IMR-90 (cell line): ENCODE measurements at regions of chr4 and their contacts with region 1.

Region 1: DNA sequence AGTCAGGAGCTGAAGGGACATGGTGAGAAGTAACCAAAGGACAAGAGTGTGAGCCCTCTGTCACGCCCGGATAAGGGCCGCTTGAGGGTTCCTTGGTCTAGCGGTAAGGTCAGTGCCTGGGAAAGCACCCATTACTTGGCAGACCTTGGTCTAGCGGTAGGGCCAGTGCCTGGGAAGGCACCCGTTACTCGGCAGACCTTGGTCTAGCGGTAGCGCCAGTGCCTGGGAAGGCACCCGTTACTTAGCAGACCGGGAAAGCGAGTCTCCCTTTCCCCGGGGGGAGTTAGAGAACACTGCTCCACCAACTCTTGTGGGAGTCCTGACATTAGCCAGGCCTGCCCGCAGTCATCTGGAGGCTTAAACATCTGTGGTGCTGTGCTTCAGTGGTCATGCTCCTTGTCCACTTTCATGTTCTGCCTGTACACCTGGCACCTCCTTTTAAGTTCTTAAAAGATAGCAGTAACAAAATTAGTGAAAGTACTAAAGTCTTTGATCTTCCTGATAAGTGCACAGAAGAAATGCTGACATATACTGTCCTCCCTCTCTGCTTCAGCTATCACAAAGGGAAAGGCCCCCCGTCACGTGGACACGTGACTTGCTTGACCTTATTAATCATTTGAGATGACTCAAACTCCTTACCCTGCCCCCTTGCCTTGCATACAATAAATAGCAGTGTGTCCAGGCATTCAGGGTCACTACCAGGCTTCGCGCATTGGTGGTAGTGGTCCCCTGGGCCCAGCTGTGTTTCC is 9.3 kb upstream of the SEC24B start:
- DNase-seq: no peak
- ATAC-seq: no peak
- H3K4me3 ChIP-seq: no peak overlapping the region
- H3K27ac ChIP-seq: no peak overlapping the region
- H3K4me1 ChIP-seq: no peaks in the 10 kb centered on the region
- H3K27me3 ChIP-seq: no peaks in the 10 kb centered on the region; the same call in 1 of the 2 replicates
- CTCF ChIP-seq: no peak
- POLR2A ChIP-seq: no peak
- RAD21 ChIP-seq: no peak

Region 2: GRCh38 chr4:109648266-109648996 is 224.2 kb after region 1 on chr4:
- CTCF ChIA-PET with region 1: no interaction called
- POLR2A ChIA-PET with region 1: no interaction called
- dilution Hi-C with region 1: no loop called
- in situ Hi-C with region 1: no loop called
- intact Hi-C with region 1: no loop called
- DNase-seq: no peak
- ATAC-seq: no peak
- H3K4me3 ChIP-seq: no peak overlapping the region
- H3K27ac ChIP-seq: no peak overlapping the region
- H3K4me1 ChIP-seq: no peaks in the 10 kb centered on the region
- H3K27me3 ChIP-seq: no peaks in the 10 kb centered on the region
- CTCF ChIP-seq: no peak
- POLR2A ChIP-seq: no peak
- RAD21 ChIP-seq: no peak

Region 3: DNA sequence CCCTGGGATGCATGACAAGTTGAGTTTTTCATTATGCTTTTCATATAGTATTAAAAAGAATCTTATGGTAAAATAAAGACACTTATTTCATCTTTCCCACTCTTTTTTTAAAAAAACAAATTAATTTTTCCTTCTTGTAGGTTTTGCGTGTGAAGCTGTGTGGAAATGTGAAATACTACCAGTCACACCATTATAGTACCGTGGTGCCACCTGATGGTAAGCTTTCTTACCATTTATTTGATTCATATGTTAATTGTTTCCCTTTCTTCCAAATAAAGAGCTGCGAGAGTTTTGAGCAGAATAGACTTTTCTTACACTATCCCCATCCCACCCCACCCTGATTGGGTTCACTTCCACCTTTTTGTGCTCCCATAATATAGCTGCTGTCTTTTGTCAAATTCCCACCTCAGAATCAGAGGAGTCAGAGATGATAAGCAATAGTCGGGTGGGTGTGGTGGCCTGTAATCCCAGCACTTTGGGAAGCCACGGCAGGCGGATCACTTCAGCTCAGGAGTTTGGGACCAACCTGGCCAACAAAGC is 234.7 kb after region 1 on chr4:
- CTCF ChIA-PET with region 1: no interaction called
- POLR2A ChIA-PET with region 1: no interaction called
- dilution Hi-C with region 1: no loop called
- in situ Hi-C with region 1: no loop called
- intact Hi-C with region 1: loop called (anchors 5 kb)
- DNase-seq: peak; percentile 6
- ATAC-seq: no peak
- H3K4me3 ChIP-seq: no peak overlapping the region
- H3K27ac ChIP-seq: no peak overlapping the region
- H3K4me1 ChIP-seq: no peaks in the 10 kb centered on the region
- H3K27me3 ChIP-seq: no peaks in the 10 kb centered on the region
- CTCF ChIP-seq: peak; percentile 24; the same call in 1 of the 2 replicates
- POLR2A ChIP-seq: no peak
- RAD21 ChIP-seq: peak; percentile 25

Region 4: DNA sequence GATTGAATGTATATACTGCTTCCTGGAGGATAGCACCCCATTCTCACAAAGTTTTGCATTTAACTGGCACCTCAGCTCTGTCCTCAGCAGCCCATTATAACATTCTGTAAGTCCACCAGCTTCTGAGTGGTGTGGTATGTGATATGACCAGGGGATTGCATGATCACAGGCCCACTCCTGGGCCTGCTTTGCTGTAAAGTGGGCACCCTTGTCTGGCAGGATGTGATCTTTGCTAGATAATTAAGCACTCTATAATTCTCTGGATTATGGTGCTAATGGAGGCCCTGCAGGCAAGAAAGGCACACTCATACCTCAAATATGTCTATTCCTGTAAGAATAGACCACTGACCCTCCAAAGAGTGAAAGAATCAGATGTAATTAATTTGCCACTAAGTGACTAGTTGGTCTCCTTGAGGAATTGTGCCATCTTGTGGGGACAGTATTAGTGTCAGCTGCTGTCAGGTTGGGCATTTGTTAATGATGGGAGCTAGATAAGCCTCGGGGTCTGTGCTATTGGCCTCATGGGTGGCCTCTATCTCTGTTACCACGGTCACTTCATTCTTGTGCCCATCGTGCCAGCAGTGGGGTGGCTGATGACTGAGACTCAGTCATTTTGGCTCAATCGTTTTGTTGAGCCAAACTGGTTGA is 379.8 kb after region 1 on chr4:
- CTCF ChIA-PET with region 1: interaction called, 5 read pairs
- POLR2A ChIA-PET with region 1: no interaction called
- dilution Hi-C with region 1: no loop called
- in situ Hi-C with region 1: no loop called
- intact Hi-C with region 1: loop called (anchors 1 kb)
- DNase-seq: peak; percentile 37
- ATAC-seq: peak; percentile 65
- H3K4me3 ChIP-seq: no peak overlapping the region
- H3K27ac ChIP-seq: no peak overlapping the region
- H3K4me1 ChIP-seq: no peaks in the 10 kb centered on the region
- H3K27me3 ChIP-seq: no peaks in the 10 kb centered on the region; the same call in 1 of the 2 replicates
- CTCF ChIP-seq: peak; percentile 43
- POLR2A ChIP-seq: no peak
- RAD21 ChIP-seq: peak; percentile 50

Region 5: GRCh38 chr4:109815151-109816081 is 391.1 kb after region 1 on chr4 and contains the start of gene GAR1:
- CTCF ChIA-PET with region 1: no interaction called
- POLR2A ChIA-PET with region 1: no interaction called
- dilution Hi-C with region 1: no loop called
- in situ Hi-C with region 1: loop called (anchors 10 kb)
- intact Hi-C with region 1: no loop called
- DNase-seq: peak; percentile 92
- ATAC-seq: peak; percentile 95
- H3K4me3 ChIP-seq: peak within 1 kb of the TSS; percentile 61
- H3K27ac ChIP-seq: peak within 1 kb of the TSS; percentile 78
- H3K4me1 ChIP-seq: no peaks in the 10 kb centered on the region
- H3K27me3 ChIP-seq: no peaks in the 10 kb centered on the region
- CTCF ChIP-seq: no peak
- POLR2A ChIP-seq: 0 out of 2 replicates have a peak, but pooled peaks have one; percentile 32
- RAD21 ChIP-seq: no peak
- total RNA-seq, gene GAR1: 1.1 and 4.4 TPM in 2 replicates

Region 6: GRCh38 chr4:109826719-109827118 is 402.5 kb after region 1 on chr4:
- CTCF ChIA-PET with region 1: interaction called, 3 read pairs
- POLR2A ChIA-PET with region 1: no interaction called
- dilution Hi-C with region 1: no loop called
- in situ Hi-C with region 1: no loop called
- intact Hi-C with region 1: loop called (anchors 2 kb)
- DNase-seq: peak; percentile 33
- ATAC-seq: peak; percentile 81
- H3K4me3 ChIP-seq: no peak overlapping the region
- H3K27ac ChIP-seq: no peak overlapping the region
- H3K4me1 ChIP-seq: no peaks in the 10 kb centered on the region
- H3K27me3 ChIP-seq: no peaks in the 10 kb centered on the region
- CTCF ChIP-seq: peak; percentile 62
- POLR2A ChIP-seq: no peak
- RAD21 ChIP-seq: peak; percentile 61

Region 7: GRCh38 chr4:109977854-109978501 is 553.7 kb after region 1 on chr4:
- CTCF ChIA-PET with region 1: interaction called, 3 read pairs
- POLR2A ChIA-PET with region 1: no interaction called
- dilution Hi-C with region 1: no loop called
- in situ Hi-C with region 1: loop called (anchors 5 kb)
- intact Hi-C with region 1: loop called (anchors 1 kb)
- DNase-seq: peak; percentile 60
- ATAC-seq: peak; percentile 56
- H3K4me3 ChIP-seq: no peak overlapping the region
- H3K27ac ChIP-seq: no peak overlapping the region
- H3K4me1 ChIP-seq: peaks cover 6% of the 10 kb centered on the region; the same call in 1 of the 2 replicates
- H3K27me3 ChIP-seq: no peaks in the 10 kb centered on the region
- CTCF ChIP-seq: peak; percentile 74
- POLR2A ChIP-seq: no peak
- RAD21 ChIP-seq: peak; percentile 69

Region 8: DNA sequence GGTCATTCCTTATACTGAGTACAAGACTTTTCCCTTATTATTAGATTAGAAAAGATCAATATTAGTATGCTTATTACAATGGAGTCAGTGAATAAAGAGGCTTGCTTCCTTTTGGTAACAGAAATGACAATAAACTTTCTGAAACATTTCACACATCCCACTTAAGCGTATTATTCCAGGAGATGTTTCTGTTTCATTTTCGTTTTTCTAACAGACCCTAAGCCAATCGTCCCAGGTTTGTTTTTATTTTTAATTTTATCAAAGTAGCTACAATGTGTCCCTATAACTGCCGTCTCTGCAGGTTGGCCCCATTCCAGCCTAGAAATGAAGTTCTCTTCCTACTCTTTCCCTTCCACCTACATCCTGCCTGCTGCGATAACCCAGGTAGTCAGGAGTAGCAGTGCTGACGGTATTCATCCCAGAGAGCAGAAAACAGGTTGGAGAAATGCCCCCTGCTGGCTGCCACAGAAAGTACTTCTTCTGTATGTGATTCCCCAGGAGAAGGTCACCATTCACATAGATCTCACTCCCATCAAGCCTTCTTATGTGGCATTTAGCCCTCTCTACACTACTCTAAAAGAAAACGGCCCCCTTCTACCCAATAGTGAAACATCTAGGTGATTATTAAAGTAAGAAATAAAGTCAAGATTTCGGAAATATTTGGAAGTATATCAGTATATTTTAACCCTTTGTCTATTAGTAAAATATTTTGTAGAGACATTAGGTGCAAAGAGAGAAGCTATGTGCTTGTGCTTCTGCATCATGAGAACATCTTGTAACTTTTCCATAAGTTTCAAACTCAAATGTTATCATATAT is 1092.0 kb after region 1 on chr4:
- CTCF ChIA-PET with region 1: no interaction called
- POLR2A ChIA-PET with region 1: no interaction called
- dilution Hi-C with region 1: no loop called
- in situ Hi-C with region 1: loop called (anchors 25 kb)
- intact Hi-C with region 1: loop called (anchors 10 kb)
- DNase-seq: peak; percentile 51
- ATAC-seq: peak; percentile 87
- H3K4me3 ChIP-seq: peak overlapping the region; percentile 39; the same call in 1 of the 2 replicates
- H3K27ac ChIP-seq: no peak overlapping the region
- H3K4me1 ChIP-seq: no peaks in the 10 kb centered on the region
- H3K27me3 ChIP-seq: no peaks in the 10 kb centered on the region
- CTCF ChIP-seq: peak; percentile 69
- POLR2A ChIP-seq: no peak
- RAD21 ChIP-seq: peak; percentile 50